ENCODE measurements at regions of chr19 and their contacts with region 1.

Region 1: DNA sequence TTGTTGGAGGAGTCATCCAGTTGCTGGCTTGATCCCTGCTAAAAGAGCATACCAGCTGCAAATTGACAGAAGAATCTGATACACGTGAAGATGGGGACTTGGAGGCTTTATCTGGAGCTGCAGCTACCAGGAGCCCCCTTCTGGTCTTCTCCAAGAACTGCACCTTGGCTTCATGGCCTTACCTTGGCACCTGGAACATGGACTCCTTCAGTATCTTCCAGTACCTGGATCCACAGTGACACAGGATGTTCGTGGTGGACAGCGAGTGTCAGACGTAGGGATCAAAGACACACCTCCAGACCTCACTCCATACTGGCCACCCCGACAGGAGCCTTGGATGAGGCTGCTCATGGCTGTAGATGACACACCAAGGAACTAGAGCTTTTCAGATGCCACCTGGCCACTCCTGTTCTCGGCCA is 9.9 kb upstream of the ACSBG2 start:
- DNase-seq: peak; percentile 63
- ATAC-seq: peak; percentile 81
- H3K4me3 Mint-ChIP-seq: no peak overlapping the region
- H3K27ac Mint-ChIP-seq: no peak overlapping the region
- H3K4me1 Mint-ChIP-seq: no peaks in the 10 kb centered on the region
- H3K27me3 Mint-ChIP-seq: no peaks in the 10 kb centered on the region
- CTCF ChIP-seq: peak; percentile 89

Region 2: DNA sequence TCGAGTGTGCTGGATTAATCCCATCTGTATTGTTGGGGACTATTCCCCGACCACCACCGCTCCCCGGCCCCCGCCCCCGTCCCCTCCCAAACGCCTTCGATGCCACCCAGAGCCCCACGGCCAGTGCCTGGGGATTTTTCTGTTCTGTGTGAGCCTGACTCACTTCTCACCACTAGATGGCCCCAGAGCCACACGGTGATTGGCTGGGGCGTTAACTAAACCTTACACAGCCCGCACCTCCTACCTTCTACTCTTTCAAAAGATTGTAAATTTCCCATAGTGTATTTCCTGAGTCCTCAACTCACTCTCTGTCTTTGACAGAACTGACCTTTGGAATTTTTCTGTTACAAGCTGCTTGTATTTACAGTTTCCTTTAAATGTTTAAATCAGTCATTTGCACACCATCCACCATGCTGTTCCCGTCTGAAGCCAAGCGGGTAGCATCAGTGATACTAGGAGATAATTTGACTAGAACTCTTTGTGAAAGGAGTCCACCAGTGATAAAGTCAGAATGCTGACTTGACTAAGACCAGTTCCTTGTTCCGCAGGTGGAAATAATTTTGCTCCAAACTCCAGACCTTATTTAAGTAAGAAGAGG is 76.7 kb before region 1 on chr19:
- CTCF ChIA-PET with region 1: interaction called, 95 read pairs
- POLR2A ChIA-PET with region 1: no interaction called
- DNase-seq: peak; percentile 78
- ATAC-seq: peak; percentile 93
- H3K4me3 Mint-ChIP-seq: no peak overlapping the region
- H3K27ac Mint-ChIP-seq: no peak overlapping the region
- H3K4me1 Mint-ChIP-seq: peaks cover 12% of the 10 kb centered on the region; the same call in 1 of the 2 replicates
- H3K27me3 Mint-ChIP-seq: peaks cover 6% of the 10 kb centered on the region; the same call in 1 of the 2 replicates
- CTCF ChIP-seq: peak; percentile 75

Region 3: GRCh38 chr19:6110360-6110977 is 15.1 kb before region 1 on chr19 and contains the start of gene RFX2:
- CTCF ChIA-PET with region 1: interaction called, 16 read pairs
- POLR2A ChIA-PET with region 1: no interaction called
- DNase-seq: peak; percentile 98
- ATAC-seq: peak; percentile 100
- H3K4me3 Mint-ChIP-seq: peak within 1 kb of the TSS; percentile 87
- H3K27ac Mint-ChIP-seq: 0 out of 2 replicates have a peak within 1 kb of the TSS, but pooled peaks have one; percentile 24
- H3K4me1 Mint-ChIP-seq: peaks cover 18% of the 10 kb centered on the region
- H3K27me3 Mint-ChIP-seq: peaks cover 71% of the 10 kb centered on the region
- CTCF ChIP-seq: no peak
- total RNA-seq, gene RFX2: 3.4 to 4.6 TPM (median 4.2 TPM) in 3 replicates

Region 4: GRCh38 chr19:6372594-6373095 is 247.1 kb after region 1 on chr19 and contains the start of gene ALKBH7:
- CTCF ChIA-PET with region 1: interaction called, 11 read pairs
- POLR2A ChIA-PET with region 1: no interaction called
- DNase-seq: peak; percentile 96
- ATAC-seq: peak; percentile 74
- H3K4me3 Mint-ChIP-seq: peak within 1 kb of the TSS; percentile 85
- H3K27ac Mint-ChIP-seq: peak within 1 kb of the TSS; percentile 99
- H3K4me1 Mint-ChIP-seq: peaks cover 17% of the 10 kb centered on the region
- H3K27me3 Mint-ChIP-seq: no peaks in the 10 kb centered on the region
- CTCF ChIP-seq: no peak
- total RNA-seq, gene ALKBH7: 96.4 to 119 TPM (median 114 TPM) in 3 replicates